Breast epithelium (tissue), 4 donors: ENCODE measurements at regions of chr10 and their contacts with region 1.

Region 1: GRCh38 chr10:90372451-90372850 is 485.4 kb downstream of the HTR7 start:
- DNase-seq: no peak
- H3K4me3 ChIP-seq: no peak overlapping the region
- H3K27ac ChIP-seq: no peak overlapping the region
- H3K4me1 ChIP-seq: no peaks in the 10 kb centered on the region
- H3K27me3 ChIP-seq: no peaks in the 10 kb centered on the region
- CTCF ChIP-seq: no peak
- POLR2A ChIP-seq: no peak

Region 2: GRCh38 chr10:89302625-89303024 is 1069.8 kb before region 1 on chr10:
- intact Hi-C with region 1: no loop called
- DNase-seq: no peak
- H3K4me3 ChIP-seq: peak overlapping the region; percentile 47 to 71 (median 52)
- H3K27ac ChIP-seq: peak overlapping the region; percentile 88 to 93
- H3K4me1 ChIP-seq: no peaks in the 10 kb centered on the region
- H3K27me3 ChIP-seq: no peaks in the 10 kb centered on the region
- CTCF ChIP-seq: no peak
- POLR2A ChIP-seq: no peak

Region 3: DNA sequence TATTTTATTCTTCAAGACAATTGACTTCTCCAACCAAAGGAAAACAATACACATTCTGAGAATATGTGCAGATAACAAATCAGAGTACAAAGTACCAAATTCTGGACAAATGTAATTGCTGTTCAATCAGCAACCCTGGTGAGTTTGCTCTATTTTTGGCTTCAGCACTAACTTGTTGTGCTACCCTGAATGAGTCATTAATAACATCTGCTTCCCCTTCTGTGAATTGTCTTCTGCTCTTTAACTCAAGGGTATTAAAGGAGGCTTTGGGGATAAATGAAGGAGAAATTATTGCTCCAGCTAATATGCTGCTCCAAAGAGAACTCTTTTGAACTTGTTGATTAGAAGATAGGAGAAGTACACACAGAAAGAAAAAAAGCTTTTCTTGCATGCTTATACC is 26.1 kb after region 1 on chr10:
- intact Hi-C with region 1: loop called (anchors 2 kb)
- DNase-seq: no peak
- H3K4me3 ChIP-seq: no peak overlapping the region
- H3K27ac ChIP-seq: no peak overlapping the region
- H3K4me1 ChIP-seq: no peaks in the 10 kb centered on the region
- H3K27me3 ChIP-seq: no peaks in the 10 kb centered on the region
- CTCF ChIP-seq: no peak
- POLR2A ChIP-seq: no peak

Region 4: DNA sequence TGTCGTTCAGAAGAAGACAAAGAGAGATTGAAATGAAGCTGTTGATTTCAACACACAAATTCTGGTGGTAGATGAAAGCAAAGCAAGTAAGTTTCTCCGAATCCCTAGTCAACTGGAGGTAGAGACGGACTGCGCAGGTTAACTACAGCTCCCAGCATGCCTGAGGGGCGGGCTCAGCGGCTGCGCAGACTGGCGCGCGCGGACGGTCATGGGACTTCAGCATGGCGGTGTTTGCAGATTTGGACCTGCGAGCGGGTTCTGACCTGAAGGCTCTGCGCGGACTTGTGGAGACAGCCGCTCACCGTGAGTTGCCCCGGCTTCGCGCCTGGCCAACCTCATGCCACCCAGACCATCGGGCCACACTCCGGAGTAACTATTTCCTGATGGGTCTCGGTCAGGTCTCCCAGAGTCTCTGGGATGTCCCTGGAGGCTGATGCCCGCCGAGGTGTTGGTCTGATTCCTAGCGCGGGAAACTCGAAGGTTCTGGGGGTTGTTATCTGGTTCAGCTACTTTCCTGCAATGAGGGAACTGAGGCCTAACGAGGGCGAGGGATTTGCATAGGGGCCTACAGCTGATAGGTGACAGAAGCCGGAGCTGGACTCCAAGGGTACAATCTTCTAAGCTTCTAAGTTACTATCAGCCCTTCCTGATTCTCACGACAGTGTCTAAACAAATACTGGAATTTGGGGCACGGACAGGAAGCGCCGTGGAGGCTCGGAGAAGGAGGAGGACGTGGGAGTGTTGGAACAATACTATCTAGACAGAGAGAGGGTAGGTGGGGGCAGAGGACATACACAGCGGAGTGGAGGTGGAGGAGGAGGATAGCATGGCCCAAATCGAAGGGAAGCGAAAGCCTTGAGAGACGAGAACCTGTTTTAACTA is 499.6 kb after region 1 on chr10 and contains the start of gene RPP30:
- intact Hi-C with region 1: no loop called
- DNase-seq: peak; percentile 77 to 83
- H3K4me3 ChIP-seq: peak within 1 kb of the TSS; percentile 73 to 78 (median 77)
- H3K27ac ChIP-seq: peak within 1 kb of the TSS; percentile 72 to 79
- H3K4me1 ChIP-seq: peaks cover 0 to 4% of the 10 kb centered on the region in 2 donors
- H3K27me3 ChIP-seq: no peaks in the 10 kb centered on the region
- CTCF ChIP-seq: no peak
- POLR2A ChIP-seq: peak; percentile 32
- total RNA-seq, gene RPP30: 31.8 to 48.7 (median 40.3) TPM